ENCODE measurements at regions of chr19 and their contacts with region 1.

Region 1: DNA sequence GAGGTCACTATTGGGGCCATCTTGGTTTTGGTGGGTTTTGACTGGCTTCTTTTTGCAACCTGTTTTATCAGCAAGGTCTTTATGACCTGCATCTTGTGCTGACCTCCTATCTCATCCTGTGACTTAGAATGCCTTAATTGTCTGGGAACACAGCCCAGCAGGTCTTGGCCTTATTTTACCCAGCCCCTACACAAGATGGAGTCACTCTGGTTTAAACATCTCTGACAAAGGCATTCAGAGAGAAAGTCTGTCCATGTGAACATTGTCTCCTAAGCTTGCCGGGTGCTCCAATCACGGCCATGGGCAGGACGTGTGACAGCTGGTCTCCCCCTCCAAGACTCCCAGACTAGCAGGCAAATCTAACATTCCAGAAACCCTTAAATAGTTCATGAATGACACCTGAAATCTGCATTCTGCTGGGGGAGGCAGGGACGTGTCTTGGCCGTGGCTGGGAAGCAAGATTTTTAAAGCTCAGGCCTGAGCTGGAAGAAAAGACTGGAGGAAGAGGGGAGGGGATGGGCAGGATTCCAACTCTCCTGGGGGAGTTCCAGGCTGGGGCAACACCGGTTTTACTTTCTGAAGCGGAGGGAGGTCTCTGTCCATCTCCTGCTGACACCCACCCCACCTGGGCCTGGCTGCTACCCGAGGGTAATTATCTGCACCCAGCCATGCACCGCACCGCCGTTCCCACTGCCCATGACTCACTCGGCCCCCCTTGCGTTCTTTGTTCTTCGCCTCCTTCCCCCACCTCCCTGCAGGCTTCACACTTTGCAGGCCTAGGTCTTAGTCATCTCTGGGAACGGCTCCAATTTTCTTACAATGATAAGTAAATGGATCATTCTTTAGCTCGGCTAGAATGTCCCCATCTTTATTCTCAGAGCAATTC is 11.6 kb upstream of the OR1M1 start:
- DNase-seq: peak; percentile 97 to 99
- H3K4me3 ChIP-seq: no peak overlapping the region; the same call in 1 of the 2 replicates
- H3K27ac ChIP-seq: peak overlapping the region; percentile 84
- H3K4me1 ChIP-seq: peaks cover 23% of the 10 kb centered on the region
- H3K27me3 ChIP-seq: no peaks in the 10 kb centered on the region
- CTCF ChIP-seq: no peak

Region 2: GRCh38 chr19:8832132-8833021 is 242.9 kb before region 1 on chr19 and contains the starts of genes MBD3L1 and ZNF558:
- CTCF ChIA-PET with region 1: no interaction called
- POLR2A ChIA-PET with region 1: no interaction called
- intact Hi-C with region 1: loop called (anchors 5 kb)
- DNase-seq: peak; percentile 97 to 99
- H3K4me3 ChIP-seq: peak within 1 kb of the TSS; percentile 87
- H3K27ac ChIP-seq: peak within 1 kb of the TSS; percentile 91
- H3K4me1 ChIP-seq: peaks cover 13% of the 10 kb centered on the region
- H3K27me3 ChIP-seq: no peaks in the 10 kb centered on the region
- CTCF ChIP-seq: no peak; the same call in 1 of the 2 replicates
- total RNA-seq, gene MBD3L1: not detected in 2 replicates
- total RNA-seq, gene ZNF558: 28.7 and 29.7 TPM in 2 replicates

Region 3: DNA sequence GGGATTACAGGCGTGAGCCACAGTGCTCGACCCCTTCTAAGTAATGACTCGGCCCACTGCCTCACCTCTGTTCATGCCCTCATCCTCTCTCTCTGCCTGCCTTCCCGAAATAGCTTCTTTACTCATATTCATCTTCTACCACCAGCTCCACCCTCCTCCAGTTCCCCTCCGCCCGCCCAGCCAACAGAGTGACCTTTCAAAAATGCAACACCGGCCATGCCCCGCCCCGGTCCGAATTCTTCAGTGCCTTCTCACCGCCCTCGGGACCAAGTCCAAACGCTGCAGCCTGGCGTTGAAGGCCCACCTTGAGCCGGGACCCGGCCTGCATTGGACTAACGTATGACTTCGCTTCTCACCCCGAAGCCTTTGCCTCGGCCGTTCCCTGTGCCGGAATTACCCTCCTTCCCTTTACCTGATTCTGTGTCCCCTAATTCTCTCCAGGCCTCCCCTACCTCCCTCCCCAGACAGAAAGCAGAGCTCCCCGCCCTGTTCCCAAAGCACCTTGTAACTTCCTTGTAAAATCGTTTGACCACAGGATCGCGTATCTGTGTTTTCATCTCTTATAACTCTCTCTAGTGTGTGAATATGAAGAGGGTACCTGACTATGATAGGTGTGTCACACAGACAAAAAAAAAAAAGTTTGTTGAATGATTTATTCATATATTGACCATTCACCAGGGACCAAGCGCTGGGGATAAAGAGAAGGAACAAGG is 57.0 kb before region 1 on chr19:
- CTCF ChIA-PET with region 1: interaction called, 4 read pairs
- POLR2A ChIA-PET with region 1: interaction called, 8 read pairs
- intact Hi-C with region 1: loop called (anchors 1 kb)
- DNase-seq: peak; percentile 94 to 98
- H3K4me3 ChIP-seq: peak overlapping the region; percentile 44; the same call in 1 of the 2 replicates
- H3K27ac ChIP-seq: peak overlapping the region; percentile 95
- H3K4me1 ChIP-seq: peaks cover 13% of the 10 kb centered on the region
- H3K27me3 ChIP-seq: no peaks in the 10 kb centered on the region
- CTCF ChIP-seq: no peak

Region 4: GRCh38 chr19:9037390-9038062 is 37.8 kb before region 1 on chr19:
- CTCF ChIA-PET with region 1: interaction called, 3 read pairs
- POLR2A ChIA-PET with region 1: interaction called, 5 read pairs
- intact Hi-C with region 1: loop called (anchors 1 kb)
- DNase-seq: peak; percentile 63 to 64
- H3K4me3 ChIP-seq: no peak overlapping the region
- H3K27ac ChIP-seq: no peak overlapping the region
- H3K4me1 ChIP-seq: peaks cover 49% of the 10 kb centered on the region
- H3K27me3 ChIP-seq: no peaks in the 10 kb centered on the region
- CTCF ChIP-seq: no peak

Region 5: GRCh38 chr19:9205501-9206113 is 130.3 kb after region 1 on chr19:
- CTCF ChIA-PET with region 1: no interaction called
- POLR2A ChIA-PET with region 1: no interaction called
- intact Hi-C with region 1: no loop called
- DNase-seq: peak in 1 of 2 experiments; percentile 64
- H3K4me3 ChIP-seq: no peak overlapping the region
- H3K27ac ChIP-seq: no peak overlapping the region
- H3K4me1 ChIP-seq: no peaks in the 10 kb centered on the region
- H3K27me3 ChIP-seq: peaks cover 73% of the 10 kb centered on the region
- CTCF ChIP-seq: peak; percentile 94